BJ (cell line): ENCODE measurements at regions of chr14 and their contacts with region 1.

Region 1: GRCh38 chr14:100417466-100417865 is 94.3 kb downstream of the SLC25A47 start:
- DNase-seq: peak; percentile 66
- H3K4me3 ChIP-seq: no peak overlapping the region
- H3K27me3 ChIP-seq: no peaks in the 10 kb centered on the region
- CTCF ChIP-seq: peak; percentile 94

Region 2: DNA sequence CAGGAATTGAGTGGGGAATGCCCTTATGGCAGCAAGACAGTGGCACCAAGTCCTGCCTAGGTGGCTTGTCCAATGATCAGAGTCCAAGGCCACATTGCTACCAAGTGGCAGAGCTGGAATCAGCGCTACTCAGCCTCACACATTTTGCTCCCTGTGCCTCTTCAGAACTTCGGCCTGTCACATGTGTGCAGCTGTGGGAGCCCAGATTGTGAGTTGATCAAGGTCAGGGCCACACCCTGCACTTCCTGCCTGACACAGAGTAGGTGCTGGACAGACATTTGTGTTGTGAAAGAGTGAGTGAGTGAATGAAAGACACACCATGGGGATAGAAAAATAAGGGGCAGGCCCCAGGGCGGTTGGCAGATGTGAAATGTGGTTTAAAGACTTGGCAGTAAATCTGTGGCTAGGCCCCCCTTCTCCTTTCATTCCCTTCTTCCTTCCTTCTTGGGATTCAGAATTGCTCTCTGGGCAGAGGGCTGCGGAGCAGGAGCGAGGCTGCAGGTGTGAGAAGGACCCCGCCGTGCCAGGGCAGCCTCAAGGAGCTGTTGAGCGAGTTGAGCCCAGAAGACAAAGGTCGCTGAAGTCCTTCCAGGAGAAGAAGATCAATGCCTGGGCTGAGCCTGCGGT is 10.8 kb before region 1 on chr14:
- CTCF ChIA-PET with region 1: interaction called, 13 read pairs
- POLR2A ChIA-PET with region 1: no interaction called
- DNase-seq: no peak
- H3K4me3 ChIP-seq: no peak overlapping the region
- H3K27me3 ChIP-seq: no peaks in the 10 kb centered on the region
- CTCF ChIP-seq: no peak

Region 3: GRCh38 chr14:100440187-100440631 is 22.7 kb after region 1 on chr14:
- CTCF ChIA-PET with region 1: interaction called, 11 read pairs
- POLR2A ChIA-PET with region 1: no interaction called
- DNase-seq: no peak
- H3K4me3 ChIP-seq: no peak overlapping the region
- H3K27me3 ChIP-seq: no peaks in the 10 kb centered on the region
- CTCF ChIP-seq: peak; percentile 67

Region 4: GRCh38 chr14:100645192-100645990 is 227.9 kb after region 1 on chr14:
- CTCF ChIA-PET with region 1: interaction called, 40 read pairs
- POLR2A ChIA-PET with region 1: no interaction called
- DNase-seq: no peak
- H3K4me3 ChIP-seq: no peak overlapping the region
- H3K27me3 ChIP-seq: peaks cover 6% of the 10 kb centered on the region; the same call in 1 of the 2 replicates
- CTCF ChIP-seq: peak; percentile 81

Region 5: GRCh38 chr14:100654814-100655740 is 237.6 kb after region 1 on chr14:
- CTCF ChIA-PET with region 1: interaction called, 21 read pairs
- POLR2A ChIA-PET with region 1: no interaction called
- DNase-seq: no peak
- H3K4me3 ChIP-seq: no peak overlapping the region
- H3K27me3 ChIP-seq: peaks cover 14% of the 10 kb centered on the region
- CTCF ChIP-seq: peak; percentile 51